Aorta (tissue), 5 donors: ENCODE measurements at regions of chr2 and their contacts with region 1.

Region 1: GRCh38 chr2:237590272-237591140 is at the start of gene RAB17:
- DNase-seq: peak; percentile 48 to 72
- ATAC-seq: no peak
- H3K4me3 ChIP-seq: no peak within 1 kb of the TSS
- H3K27ac ChIP-seq: peak within 1 kb of the TSS in 1 of 2 donors; percentile 39
- H3K4me1 ChIP-seq: peaks cover 0 to 4% of the 10 kb centered on the region in 2 donors
- H3K27me3 ChIP-seq: no peaks in the 10 kb centered on the region
- total RNA-seq, gene RAB17: 3.7 to 4.5 TPM

Region 2: GRCh38 chr2:237627441-237628246 is 37.1 kb after region 1 on chr2 and contains the start of gene LRRFIP1:
- intact Hi-C with region 1: loop called in 1 of 2 experiments (anchors 5 kb)
- DNase-seq: peak in 1 of 2 donors; percentile 84
- ATAC-seq: peak; percentile 78
- H3K4me3 ChIP-seq: peak within 1 kb of the TSS; percentile 77 to 91
- H3K27ac ChIP-seq: peak within 1 kb of the TSS; percentile 78 to 89
- H3K4me1 ChIP-seq: peaks cover under 1 to 4% of the 10 kb centered on the region in 2 donors
- H3K27me3 ChIP-seq: no peaks in the 10 kb centered on the region
- total RNA-seq, gene LRRFIP1: 234 to 348 TPM

Region 3: GRCh38 chr2:237691908-237692600 is 101.5 kb after region 1 on chr2:
- intact Hi-C with region 1: loop called in 1 of 2 experiments (anchors 2 kb)
- DNase-seq: peak; percentile 98 to 99
- ATAC-seq: peak; percentile 85
- H3K4me3 ChIP-seq: peak overlapping the region; percentile 70 to 86
- H3K27ac ChIP-seq: peak overlapping the region; percentile 78 to 90
- H3K4me1 ChIP-seq: peaks cover 3 to 8% of the 10 kb centered on the region in 2 donors
- H3K27me3 ChIP-seq: no peaks in the 10 kb centered on the region